Activated CD8-positive, alpha-beta T cell treated with anti-CD3 and anti-CD28 coated beads for 36 hours (primary cell): ENCODE measurements at regions of chr3 and their contacts with region 1.

Region 1: GRCh38 chr3:66998113-66998903 is at the start of gene KBTBD8:
- DNase-seq: peak; percentile 98
- ATAC-seq: peak; percentile 95
- H3K4me3 Mint-ChIP-seq: peak within 1 kb of the TSS; percentile 98
- H3K27ac Mint-ChIP-seq: peak within 1 kb of the TSS; percentile 94
- H3K4me1 Mint-ChIP-seq: peaks cover 29% of the 10 kb centered on the region
- H3K27me3 Mint-ChIP-seq: peaks cover 9% of the 10 kb centered on the region
- CTCF ChIP-seq: no peak
- total RNA-seq, gene KBTBD8: 10.9 to 11.1 TPM

Region 2: DNA sequence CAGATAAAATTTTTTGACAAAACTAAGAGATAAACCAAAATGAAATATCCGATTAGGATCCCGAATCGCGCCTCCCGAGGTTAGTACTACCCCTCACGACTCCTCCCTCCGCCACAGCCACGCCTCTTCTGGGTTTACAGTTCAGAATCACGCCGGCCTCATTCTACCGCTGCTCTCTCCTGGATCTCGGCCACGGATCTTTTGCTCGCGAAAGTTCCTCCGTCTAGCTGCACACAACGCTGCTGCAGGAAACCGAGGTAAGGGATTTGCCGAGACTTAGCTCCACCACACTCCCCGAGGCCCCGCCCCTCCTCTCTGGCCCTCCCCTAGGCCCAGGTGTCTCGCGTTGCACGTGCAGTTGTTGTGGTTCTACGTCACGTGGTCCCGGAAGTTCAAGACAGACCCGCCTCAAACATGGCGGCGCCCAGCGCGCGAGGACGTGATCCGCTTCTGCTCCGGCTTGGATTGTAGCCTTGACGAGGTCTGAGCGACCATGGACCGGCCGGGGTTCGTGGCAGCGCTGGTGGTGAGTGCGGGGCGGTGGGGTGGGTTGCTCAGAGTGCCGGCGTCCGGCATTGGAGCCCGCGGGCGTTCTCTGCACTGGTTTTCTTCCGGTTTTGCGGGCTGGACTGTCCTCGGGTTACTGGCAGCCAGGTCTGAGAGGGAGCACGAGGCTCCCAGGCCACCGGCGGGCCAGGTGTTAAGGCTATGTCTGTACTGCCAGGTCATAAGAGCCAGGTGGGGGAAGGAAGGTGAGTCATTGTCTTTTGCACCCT is 777.5 kb before region 1 on chr3 and contains the start of gene SLC25A26:
- CTCF ChIA-PET with region 1: no interaction called
- POLR2A ChIA-PET with region 1: no interaction called
- intact Hi-C with region 1: loop called (anchors 5 kb)
- DNase-seq: peak; percentile 99
- ATAC-seq: peak; percentile 96
- H3K4me3 Mint-ChIP-seq: peak within 1 kb of the TSS; percentile 97
- H3K27ac Mint-ChIP-seq: peak within 1 kb of the TSS; percentile 95
- H3K4me1 Mint-ChIP-seq: peaks cover 36% of the 10 kb centered on the region
- H3K27me3 Mint-ChIP-seq: no peaks in the 10 kb centered on the region
- CTCF ChIP-seq: no peak
- total RNA-seq, gene SLC25A26: 28.5 to 31.0 TPM